Right lobe of liver (tissue), 6 donors: ENCODE measurements at regions of chr1 and their contacts with region 1.

Region 1: GRCh38 chr1:54488779-54489626 is 59.0 kb upstream of the ACOT11 start:
- DNase-seq: peak; percentile 82 to 83 (median 83)
- ATAC-seq: peak; percentile 70 to 80 (median 74)
- H3K4me3 ChIP-seq: peak overlapping the region; percentile 57 to 59 (median 57)
- H3K27ac ChIP-seq: peak overlapping the region; percentile 60 to 86 (median 85)
- H3K4me1 ChIP-seq: peaks cover 0 to 19% (median 8%) of the 10 kb centered on the region in 4 donors
- H3K27me3 ChIP-seq: no peaks in the 10 kb centered on the region
- CTCF ChIP-seq: peak; percentile 96 to 98 (median 97)
- POLR2A ChIP-seq: no peak

Region 2: GRCh38 chr1:54121482-54122134 is 367.4 kb before region 1 on chr1:
- intact Hi-C with region 1: loop called in 1 of 2 experiments (anchors 10 kb)
- DNase-seq: peak; percentile 75 to 79 (median 77)
- ATAC-seq: peak; percentile 77 to 83 (median 80)
- H3K4me3 ChIP-seq: no peak overlapping the region
- H3K27ac ChIP-seq: no peak overlapping the region
- H3K4me1 ChIP-seq: peaks cover 0 to 5% (median 2%) of the 10 kb centered on the region in 4 donors
- H3K27me3 ChIP-seq: no peaks in the 10 kb centered on the region
- CTCF ChIP-seq: peak; percentile 63 to 74 (median 68)
- POLR2A ChIP-seq: no peak

Region 3: GRCh38 chr1:54239631-54240031 is 249.4 kb before region 1 on chr1:
- intact Hi-C with region 1: no loop called
- DNase-seq: no peak
- ATAC-seq: no peak
- H3K4me3 ChIP-seq: no peak overlapping the region
- H3K27ac ChIP-seq: no peak overlapping the region
- H3K4me1 ChIP-seq: no peaks in the 10 kb centered on the region
- H3K27me3 ChIP-seq: no peaks in the 10 kb centered on the region
- CTCF ChIP-seq: no peak
- POLR2A ChIP-seq: no peak

Region 4: DNA sequence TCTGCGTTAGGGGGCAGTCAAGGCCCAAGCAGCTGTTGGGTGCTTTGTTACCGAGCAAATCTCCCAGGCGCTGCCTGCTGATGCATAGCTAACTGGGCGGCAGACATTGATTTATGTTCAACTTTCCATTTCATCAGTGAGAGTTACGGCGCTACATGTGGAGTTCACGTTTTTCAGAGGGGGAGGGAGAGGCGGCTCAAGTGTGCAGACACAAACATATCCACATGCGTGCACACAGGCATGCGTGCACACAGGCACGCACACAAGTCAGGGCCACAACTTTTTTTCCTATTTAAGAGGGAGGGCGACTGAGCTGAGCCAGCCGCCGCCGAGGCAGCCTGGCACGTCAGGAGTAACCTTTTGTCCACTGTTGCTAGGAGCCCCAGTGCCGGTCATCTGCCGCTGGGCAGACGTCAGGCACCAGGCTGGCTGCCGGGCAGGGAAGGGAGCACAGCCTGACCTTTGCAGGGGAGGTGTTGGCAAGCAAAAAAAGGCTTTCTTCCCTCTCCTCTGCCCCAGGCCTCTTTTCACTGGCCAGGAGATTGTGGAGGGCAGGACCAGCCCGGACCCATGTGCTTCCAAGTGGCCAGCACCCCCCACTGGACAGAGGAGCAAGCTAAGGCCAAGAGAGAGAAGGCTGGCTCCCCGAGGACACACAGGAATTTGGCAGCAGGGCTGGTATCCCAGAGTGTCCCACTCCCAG is 215.8 kb before region 1 on chr1:
- intact Hi-C with region 1: loop called in 1 of 2 experiments (anchors 5 kb)
- DNase-seq: peak; percentile 90 to 97 (median 96)
- ATAC-seq: peak; percentile 54 to 76 (median 72)
- H3K4me3 ChIP-seq: peak overlapping the region in 2 of 3 donors; percentile 17 to 19
- H3K27ac ChIP-seq: peak overlapping the region; percentile 92 to 98 (median 98)
- H3K4me1 ChIP-seq: peaks cover 0 to 70% (median 30%) of the 10 kb centered on the region in 4 donors
- H3K27me3 ChIP-seq: no peaks in the 10 kb centered on the region
- CTCF ChIP-seq: peak in 3 of 4 donors; percentile 30 to 46 (median 34)
- POLR2A ChIP-seq: peak; percentile 74

Region 5: GRCh38 chr1:54421101-54421504 is 67.9 kb before region 1 on chr1:
- intact Hi-C with region 1: no loop called
- DNase-seq: no peak
- ATAC-seq: no peak
- H3K4me3 ChIP-seq: no peak overlapping the region
- H3K27ac ChIP-seq: no peak overlapping the region
- H3K4me1 ChIP-seq: no peaks in the 10 kb centered on the region
- H3K27me3 ChIP-seq: no peaks in the 10 kb centered on the region
- CTCF ChIP-seq: no peak
- POLR2A ChIP-seq: no peak